ENCODE measurements at regions of chr4 and their contacts with region 1.

Region 1: DNA sequence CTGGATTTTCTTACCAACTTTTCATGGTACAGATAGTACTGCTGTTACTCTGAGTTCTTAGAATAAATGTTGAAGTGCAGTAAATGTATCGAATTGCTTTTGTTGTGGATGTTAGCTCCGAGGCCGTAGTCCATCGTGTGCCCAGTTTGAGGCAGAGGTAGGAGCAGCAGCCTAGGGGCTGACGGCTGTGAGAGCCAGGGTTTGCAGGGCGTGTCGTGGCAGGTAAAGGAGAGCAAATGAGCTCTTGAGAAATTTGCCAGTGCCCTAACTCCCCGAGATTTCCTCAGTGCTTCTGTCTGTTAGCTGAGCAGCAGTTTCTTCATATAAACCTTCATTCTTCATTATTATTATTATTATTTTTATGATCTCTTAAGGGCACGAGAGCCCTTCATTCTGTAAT is 21.6 kb downstream of the PRIMPOL start:
- DNase-seq: peak; percentile 64
- H3K4me3 ChIP-seq: no peak overlapping the region
- H3K27ac ChIP-seq: no peak overlapping the region
- H3K4me1 ChIP-seq: peaks cover 7% of the 10 kb centered on the region
- H3K27me3 ChIP-seq: no peaks in the 10 kb centered on the region
- CTCF ChIP-seq: no peak

Region 2: GRCh38 chr4:184688447-184688846 is 17.3 kb after region 1 on chr4:
- CTCF ChIA-PET with region 1: no interaction called
- dilution Hi-C with region 1: no loop called
- in situ Hi-C with region 1: no loop called
- intact Hi-C with region 1: loop called (anchors 1 kb)
- DNase-seq: peak; percentile 92
- H3K4me3 ChIP-seq: no peak overlapping the region
- H3K27ac ChIP-seq: peak overlapping the region; percentile 69
- H3K4me1 ChIP-seq: peaks cover 23% of the 10 kb centered on the region
- H3K27me3 ChIP-seq: no peaks in the 10 kb centered on the region
- CTCF ChIP-seq: no peak

Region 3: DNA sequence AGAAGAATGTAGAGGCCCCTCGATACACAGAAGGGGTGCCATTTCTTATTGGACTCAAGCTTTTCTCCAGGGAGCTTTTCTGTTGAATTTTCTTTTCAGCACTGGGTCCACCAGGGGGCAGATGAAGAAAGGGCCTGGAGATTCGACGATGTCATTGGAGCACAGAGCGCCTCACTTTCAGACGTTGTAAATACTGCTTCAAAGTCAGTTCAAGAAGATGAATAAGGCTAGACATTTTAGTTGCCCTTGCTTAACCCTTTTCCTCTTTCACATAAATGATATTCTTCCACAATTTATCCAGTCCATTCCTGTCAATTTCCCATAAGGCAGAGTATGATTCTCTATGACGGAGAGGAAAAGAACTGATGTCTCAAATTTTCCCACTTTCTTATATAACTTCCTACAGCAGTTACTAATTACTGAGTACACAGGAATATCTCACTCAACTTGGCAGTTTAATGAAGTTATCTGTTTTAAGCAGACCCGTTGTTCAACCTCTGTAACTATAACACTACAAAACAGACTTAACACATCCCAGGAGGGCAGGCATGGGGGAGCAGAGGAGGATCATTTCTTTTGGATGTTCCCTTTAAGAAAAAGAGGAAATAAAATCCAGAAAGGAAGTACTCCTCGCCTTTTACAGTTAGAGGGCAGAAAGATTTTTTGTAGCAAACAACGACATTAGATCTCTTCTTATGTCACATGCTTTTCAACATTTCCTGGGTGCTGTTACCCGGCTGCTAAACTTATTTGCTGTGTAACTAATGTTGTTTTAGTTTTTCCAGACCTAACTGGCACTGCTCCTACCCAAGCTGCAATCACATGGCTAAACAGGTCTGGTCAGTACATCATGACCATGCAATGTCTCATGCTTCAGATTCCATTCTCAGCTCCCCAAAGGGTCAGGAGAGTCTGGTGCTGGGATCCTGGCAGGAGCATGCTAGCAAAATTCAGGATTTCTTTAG is 75.0 kb after region 1 on chr4:
- CTCF ChIA-PET with region 1: no interaction called
- dilution Hi-C with region 1: no loop called
- in situ Hi-C with region 1: no loop called
- intact Hi-C with region 1: no loop called
- DNase-seq: peak; percentile 84
- H3K4me3 ChIP-seq: no peak overlapping the region
- H3K27ac ChIP-seq: peak overlapping the region; percentile 64
- H3K4me1 ChIP-seq: peaks cover 34% of the 10 kb centered on the region
- H3K27me3 ChIP-seq: no peaks in the 10 kb centered on the region
- CTCF ChIP-seq: peak; percentile 72 to 84